MCF 10A (cell line): ENCODE measurements at regions of chr13 and their contacts with region 1.

Region 1: GRCh38 chr13:69565334-69565733 is 542.3 kb upstream of the ATXN8OS start:
- DNase-seq: peak; percentile 81
- H3K4me3 Mint-ChIP-seq: no peak overlapping the region
- H3K27ac Mint-ChIP-seq: no peak overlapping the region
- H3K4me1 Mint-ChIP-seq: no peaks in the 10 kb centered on the region
- H3K27me3 Mint-ChIP-seq: peaks cover under 1% of the 10 kb centered on the region
- CTCF ChIP-seq: peak; percentile 38

Region 2: DNA sequence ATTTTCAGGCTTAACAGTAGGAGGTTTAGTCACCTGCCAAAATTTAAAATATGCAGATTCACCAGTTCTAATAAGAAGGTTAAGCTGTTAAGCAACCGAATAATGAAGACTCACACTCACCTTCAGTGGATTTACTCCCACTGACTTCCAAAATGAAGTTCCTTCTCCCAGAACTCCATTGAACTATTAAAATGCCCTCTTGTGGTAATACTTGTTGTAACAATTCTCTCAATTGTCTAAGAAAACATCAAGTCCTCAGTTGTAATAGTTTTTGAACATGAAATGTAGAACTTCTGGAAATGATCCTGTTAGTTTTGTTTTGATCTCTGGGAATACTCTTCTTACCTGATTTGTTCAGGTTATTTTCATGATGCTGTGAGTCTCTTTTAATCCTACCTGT is 20.3 kb after region 1 on chr13:
- CTCF ChIA-PET with region 1: interaction called, 12 read pairs
- POLR2A ChIA-PET with region 1: no interaction called
- intact Hi-C with region 1: no loop called
- DNase-seq: no peak
- H3K4me3 Mint-ChIP-seq: no peak overlapping the region
- H3K27ac Mint-ChIP-seq: no peak overlapping the region
- H3K4me1 Mint-ChIP-seq: no peaks in the 10 kb centered on the region
- H3K27me3 Mint-ChIP-seq: peaks cover 72% of the 10 kb centered on the region
- CTCF ChIP-seq: no peak

Region 3: GRCh38 chr13:69641773-69642172 is 76.4 kb after region 1 on chr13:
- CTCF ChIA-PET with region 1: no interaction called
- POLR2A ChIA-PET with region 1: no interaction called
- intact Hi-C with region 1: no loop called
- DNase-seq: no peak
- H3K4me3 Mint-ChIP-seq: no peak overlapping the region
- H3K27ac Mint-ChIP-seq: no peak overlapping the region
- H3K4me1 Mint-ChIP-seq: no peaks in the 10 kb centered on the region
- H3K27me3 Mint-ChIP-seq: peaks cover 20% of the 10 kb centered on the region
- CTCF ChIP-seq: no peak